Activated CD4-positive, alpha-beta T cell treated with anti-CD3 and anti-CD28 coated beads for 36 hours (primary cell): ENCODE measurements at regions of chr11 and their contacts with region 1.

Region 1: DNA sequence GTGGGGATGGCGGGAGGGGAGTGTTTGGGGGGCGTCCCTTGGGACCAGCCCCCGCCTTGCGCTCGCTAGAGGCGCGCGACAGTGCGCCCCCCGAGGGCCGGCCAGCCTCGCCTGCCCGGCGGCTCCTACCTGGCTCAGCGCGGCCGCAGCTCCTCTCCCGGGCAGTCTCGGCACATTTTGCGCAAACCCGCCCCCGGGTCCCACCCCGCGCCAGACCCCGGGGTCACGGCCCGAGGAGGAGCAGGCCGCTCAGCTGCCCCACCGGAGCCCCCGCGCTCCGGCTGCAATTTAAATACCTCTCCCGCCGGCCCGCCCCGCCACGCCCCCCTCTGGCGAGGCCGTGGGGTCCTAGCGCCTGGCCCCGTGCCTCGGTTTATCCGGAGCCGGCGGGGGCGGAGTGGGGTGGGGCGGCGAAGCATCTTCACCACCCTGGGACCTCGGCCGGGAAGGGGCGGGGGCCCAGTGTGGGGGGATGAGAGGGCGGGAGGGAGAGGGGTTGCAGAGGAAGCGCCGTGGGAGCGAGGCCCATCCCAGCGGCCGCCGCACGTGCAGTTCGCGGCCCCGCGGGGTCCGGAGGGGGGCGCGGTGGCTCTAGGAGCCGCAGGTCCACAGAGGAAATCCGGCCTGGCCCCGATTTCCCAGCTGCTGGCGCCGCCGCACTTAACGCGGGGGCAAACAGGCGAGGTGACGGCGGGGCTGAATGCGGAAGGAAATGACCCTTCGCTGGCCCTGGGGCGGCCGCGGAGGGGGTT is at the start of gene LRRC32:
- DNase-seq: peak; percentile 42
- ATAC-seq: no peak
- H3K4me3 Mint-ChIP-seq: peak within 1 kb of the TSS; percentile 58
- H3K27ac Mint-ChIP-seq: no peak within 1 kb of the TSS
- H3K4me1 Mint-ChIP-seq: peaks cover 17% of the 10 kb centered on the region
- H3K27me3 Mint-ChIP-seq: peaks cover 29% of the 10 kb centered on the region
- total RNA-seq, gene LRRC32: 4.7 to 5.7 TPM

Region 2: DNA sequence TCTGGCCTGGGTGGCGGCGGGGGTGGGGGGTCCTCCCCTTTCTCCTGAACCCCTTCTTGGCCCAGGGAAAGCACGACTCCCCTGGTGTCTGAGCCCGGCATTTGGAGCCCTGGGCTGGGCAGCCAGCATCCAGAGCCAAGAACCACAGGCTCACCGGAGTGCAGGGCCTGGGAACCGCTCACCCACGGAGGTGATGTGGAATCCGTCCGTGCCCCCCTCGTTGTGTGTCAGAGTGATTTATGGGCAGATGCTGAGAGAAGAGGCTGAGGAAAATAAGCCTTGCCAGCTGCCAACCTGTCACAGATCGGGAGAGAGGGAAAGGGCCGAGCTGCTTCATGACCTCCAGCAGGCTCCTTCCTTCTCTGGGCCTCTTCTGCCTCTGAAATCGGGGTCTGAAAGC is 498.1 kb before region 1 on chr11:
- CTCF ChIA-PET with region 1: no interaction called
- POLR2A ChIA-PET with region 1: no interaction called
- intact Hi-C with region 1: no loop called
- DNase-seq: no peak
- ATAC-seq: no peak
- H3K4me3 Mint-ChIP-seq: no peak overlapping the region
- H3K27ac Mint-ChIP-seq: no peak overlapping the region
- H3K4me1 Mint-ChIP-seq: no peaks in the 10 kb centered on the region
- H3K27me3 Mint-ChIP-seq: no peaks in the 10 kb centered on the region

Region 3: DNA sequence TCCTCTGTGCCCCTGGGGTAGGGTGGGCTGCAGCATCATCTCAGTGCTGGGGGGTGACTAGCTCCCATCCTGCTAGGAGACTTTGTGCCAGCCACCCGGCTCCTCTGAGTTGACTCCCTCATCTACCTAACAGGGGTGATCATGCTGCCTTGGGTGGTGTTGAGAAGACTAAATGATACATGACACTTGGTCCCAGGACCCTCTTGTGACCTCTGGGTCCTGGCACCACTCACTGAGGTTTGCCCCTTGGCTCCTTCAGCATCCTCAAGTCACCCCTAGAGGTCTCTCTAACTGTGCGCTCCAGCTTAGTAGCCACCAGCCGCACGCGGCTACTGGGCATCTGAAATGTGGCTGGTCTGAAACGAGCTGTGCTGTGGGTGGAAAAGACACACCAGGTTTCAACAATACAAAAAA is 72.2 kb before region 1 on chr11:
- CTCF ChIA-PET with region 1: no interaction called
- POLR2A ChIA-PET with region 1: no interaction called
- intact Hi-C with region 1: loop called in 1 of 2 experiments (anchors 10 kb)
- DNase-seq: peak; percentile 47
- ATAC-seq: peak; percentile 75
- H3K4me3 Mint-ChIP-seq: no peak overlapping the region
- H3K27ac Mint-ChIP-seq: no peak overlapping the region
- H3K4me1 Mint-ChIP-seq: peaks cover 1% of the 10 kb centered on the region
- H3K27me3 Mint-ChIP-seq: peaks cover 4% of the 10 kb centered on the region

Region 4: GRCh38 chr11:76807206-76807875 is 136.7 kb after region 1 on chr11:
- CTCF ChIA-PET with region 1: no interaction called
- POLR2A ChIA-PET with region 1: no interaction called
- intact Hi-C with region 1: no loop called
- DNase-seq: peak; percentile 91
- ATAC-seq: peak; percentile 21
- H3K4me3 Mint-ChIP-seq: no peak overlapping the region
- H3K27ac Mint-ChIP-seq: no peak overlapping the region
- H3K4me1 Mint-ChIP-seq: peaks cover 31% of the 10 kb centered on the region
- H3K27me3 Mint-ChIP-seq: peaks cover 12% of the 10 kb centered on the region